Activated naive CD4-positive, alpha-beta T cell treated with anti-CD3 and anti-CD28 coated beads, Interleukin-2, amount 10 ng/mL, durations not matched to agents 7 days and 5 days (primary cell): ENCODE measurements at regions of chr12 and their contacts with region 1.

Region 1: GRCh38 chr12:120317224-120318105 is 10.1 kb downstream of the PLA2G1B start:
- DNase-seq: peak; percentile 100
- H3K4me3 Mint-ChIP-seq: peak overlapping the region; percentile 83
- H3K27ac Mint-ChIP-seq: peak overlapping the region; percentile 93
- H3K4me1 Mint-ChIP-seq: peaks cover 15% of the 10 kb centered on the region
- H3K27me3 Mint-ChIP-seq: peaks cover 13% of the 10 kb centered on the region

Region 2: DNA sequence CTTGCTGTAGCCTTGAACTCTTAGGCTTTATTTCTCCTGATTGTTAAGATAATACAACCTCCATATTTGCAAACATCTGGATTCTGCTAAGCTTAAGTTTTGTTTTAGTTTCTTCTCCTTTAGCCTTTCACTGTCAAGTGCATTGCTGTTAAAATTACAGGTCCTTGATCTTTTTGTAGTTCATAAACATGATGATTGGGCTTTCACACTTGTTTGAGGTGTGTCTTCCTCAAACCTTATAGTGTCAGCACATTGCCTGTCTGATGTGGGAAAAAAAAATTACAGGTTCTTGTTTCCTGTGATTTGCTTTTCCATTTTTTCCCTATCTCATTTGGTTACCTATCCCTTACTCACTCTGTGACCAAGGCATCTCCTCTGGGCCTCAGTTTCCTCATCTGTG is 269.2 kb before region 1 on chr12:
- CTCF ChIA-PET with region 1: no interaction called
- DNase-seq: no peak
- H3K4me3 Mint-ChIP-seq: no peak overlapping the region
- H3K27ac Mint-ChIP-seq: peak overlapping the region; percentile 13
- H3K4me1 Mint-ChIP-seq: peaks cover 30% of the 10 kb centered on the region
- H3K27me3 Mint-ChIP-seq: no peaks in the 10 kb centered on the region

Region 3: DNA sequence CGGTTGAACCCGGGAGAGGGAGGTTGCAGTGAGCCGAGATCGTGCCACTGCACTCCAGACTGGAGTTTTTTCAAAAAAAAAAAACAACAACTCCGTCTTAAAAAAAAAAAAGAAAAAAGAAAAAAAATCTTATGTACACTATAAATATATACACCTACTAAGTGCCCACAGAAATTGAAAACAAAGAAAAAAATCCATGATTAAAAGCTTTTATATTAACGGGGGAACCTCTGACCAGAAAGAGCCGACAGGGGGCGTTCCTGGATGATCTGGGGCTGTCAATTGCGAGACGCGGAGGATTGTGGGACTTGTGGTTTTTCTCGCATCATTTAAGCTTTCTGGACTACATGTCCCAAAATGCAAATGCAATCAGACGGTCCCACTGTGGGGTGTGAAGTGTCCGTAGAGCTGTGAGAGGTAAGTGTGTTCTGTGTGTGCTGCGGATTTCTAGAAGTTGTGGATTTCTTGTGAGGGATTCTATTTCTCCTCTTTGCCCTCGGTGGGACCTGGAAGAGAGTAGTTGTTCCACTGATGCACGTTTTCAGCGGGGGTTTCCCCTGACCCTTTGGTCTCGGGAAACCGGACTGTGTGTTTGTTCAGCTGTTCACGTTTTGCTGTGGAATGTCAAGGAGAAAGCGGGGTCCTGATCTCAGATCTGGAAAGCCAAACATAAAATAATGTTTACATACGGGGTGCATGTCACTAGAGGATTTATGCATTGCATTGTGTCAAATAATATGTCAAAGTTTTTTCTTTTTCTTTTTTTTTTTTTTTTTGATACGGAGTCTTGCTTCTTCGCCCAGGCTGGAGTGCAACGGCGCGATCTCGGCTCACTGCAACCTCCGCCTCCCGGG is 15.3 kb before region 1 on chr12 and contains the start of gene SIRT4:
- CTCF ChIA-PET with region 1: interaction called, 13 read pairs
- DNase-seq: peak; percentile 95
- H3K4me3 Mint-ChIP-seq: peak within 1 kb of the TSS; percentile 81
- H3K27ac Mint-ChIP-seq: peak within 1 kb of the TSS; percentile 64
- H3K4me1 Mint-ChIP-seq: peaks cover 11% of the 10 kb centered on the region
- H3K27me3 Mint-ChIP-seq: no peaks in the 10 kb centered on the region